Activated CD8-positive, alpha-beta memory T cell treated with anti-CD3 and anti-CD28 coated beads, Interleukin-2, amount 10 ng/mL, durations not matched to agents 7 days and 5 days (primary cell): ENCODE measurements at regions of chr1 and their contacts with region 1.

Region 1: DNA sequence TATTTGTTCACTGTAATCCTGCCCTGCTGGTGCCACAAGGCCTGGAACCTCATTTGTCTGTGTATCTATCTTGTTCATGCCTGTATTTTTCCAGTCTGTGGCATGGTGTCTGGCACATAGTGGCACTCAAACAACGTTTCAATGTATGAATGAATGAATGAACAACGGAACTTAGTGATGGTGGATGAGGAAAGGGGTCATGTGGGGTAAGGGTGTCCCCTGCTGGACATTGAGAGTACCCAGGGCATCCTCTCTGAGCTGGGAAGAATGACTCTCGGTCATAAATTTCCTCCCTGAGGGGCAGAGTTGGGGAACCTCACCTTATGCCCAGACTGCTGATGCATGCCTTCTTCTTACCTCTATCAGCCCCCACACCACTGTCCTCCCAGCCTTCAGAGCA is 18.9 kb upstream of the ZNF683 start:
- DNase-seq: peak; percentile 78
- ATAC-seq: peak; percentile 80
- H3K4me3 Mint-ChIP-seq: no peak overlapping the region
- H3K27ac Mint-ChIP-seq: peak overlapping the region; percentile 62
- H3K4me1 Mint-ChIP-seq: peaks cover 55% of the 10 kb centered on the region
- H3K27me3 Mint-ChIP-seq: peaks cover 4% of the 10 kb centered on the region

Region 2: DNA sequence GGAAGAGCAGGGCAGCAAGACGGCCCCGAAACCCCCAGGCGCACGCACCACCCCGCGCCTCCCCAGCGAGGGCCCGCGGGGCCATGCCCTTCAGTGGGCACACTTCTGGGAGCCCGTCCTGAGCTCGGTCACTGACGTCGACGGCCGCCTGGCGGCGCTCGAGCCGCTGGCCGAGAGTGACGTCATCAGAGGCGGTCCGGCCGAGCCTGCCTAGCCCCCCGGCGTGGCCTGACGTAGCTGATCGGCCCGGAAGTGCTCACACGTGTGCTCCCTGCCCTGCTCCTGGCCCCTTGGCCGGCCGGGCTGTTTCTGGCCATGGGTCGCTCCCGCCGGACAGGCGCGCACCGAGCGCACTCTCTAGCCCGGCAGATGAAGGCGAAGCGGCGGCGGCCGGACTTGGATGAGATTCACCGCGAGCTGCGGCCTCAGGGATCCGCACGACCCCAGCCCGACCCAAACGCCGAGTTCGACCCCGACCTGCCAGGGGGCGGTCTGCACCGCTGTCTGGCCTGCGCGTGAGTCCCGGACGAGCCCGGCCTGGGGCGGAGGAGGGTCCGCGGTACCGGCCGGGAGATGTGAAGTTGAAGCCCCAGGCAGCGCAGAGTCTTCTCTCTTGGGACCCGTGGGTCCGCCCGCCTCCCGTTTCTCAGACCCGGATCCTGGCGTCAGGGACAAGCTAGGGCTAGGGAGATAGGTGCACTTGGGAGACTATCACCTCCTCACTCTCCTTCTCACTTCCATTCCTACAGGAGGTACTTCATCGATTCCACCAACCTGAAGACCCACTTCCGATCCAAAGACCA is 221.6 kb before region 1 on chr1 and contains the start of gene ZNF593:
- CTCF ChIA-PET with region 1: interaction called, 17 read pairs
- DNase-seq: peak; percentile 92
- ATAC-seq: peak; percentile 97
- H3K4me3 Mint-ChIP-seq: peak within 1 kb of the TSS; percentile 89
- H3K27ac Mint-ChIP-seq: peak within 1 kb of the TSS; percentile 88
- H3K4me1 Mint-ChIP-seq: peaks cover 26% of the 10 kb centered on the region
- H3K27me3 Mint-ChIP-seq: peaks cover 11% of the 10 kb centered on the region
- total RNA-seq, gene ZNF593: 40.1 to 48.1 TPM

Region 3: GRCh38 chr1:26284597-26285360 is 106.7 kb before region 1 on chr1:
- CTCF ChIA-PET with region 1: interaction called, 96 read pairs
- DNase-seq: peak; percentile 99
- ATAC-seq: peak; percentile 71
- H3K4me3 Mint-ChIP-seq: peak overlapping the region; percentile 69
- H3K27ac Mint-ChIP-seq: peak overlapping the region; percentile 99
- H3K4me1 Mint-ChIP-seq: peaks cover 89% of the 10 kb centered on the region
- H3K27me3 Mint-ChIP-seq: no peaks in the 10 kb centered on the region

Region 4: GRCh38 chr1:26327956-26328362 is 63.5 kb before region 1 on chr1:
- CTCF ChIA-PET with region 1: interaction called, 39 read pairs
- DNase-seq: no peak
- ATAC-seq: no peak
- H3K4me3 Mint-ChIP-seq: no peak overlapping the region
- H3K27ac Mint-ChIP-seq: no peak overlapping the region
- H3K4me1 Mint-ChIP-seq: peaks cover 6% of the 10 kb centered on the region
- H3K27me3 Mint-ChIP-seq: no peaks in the 10 kb centered on the region

Region 5: DNA sequence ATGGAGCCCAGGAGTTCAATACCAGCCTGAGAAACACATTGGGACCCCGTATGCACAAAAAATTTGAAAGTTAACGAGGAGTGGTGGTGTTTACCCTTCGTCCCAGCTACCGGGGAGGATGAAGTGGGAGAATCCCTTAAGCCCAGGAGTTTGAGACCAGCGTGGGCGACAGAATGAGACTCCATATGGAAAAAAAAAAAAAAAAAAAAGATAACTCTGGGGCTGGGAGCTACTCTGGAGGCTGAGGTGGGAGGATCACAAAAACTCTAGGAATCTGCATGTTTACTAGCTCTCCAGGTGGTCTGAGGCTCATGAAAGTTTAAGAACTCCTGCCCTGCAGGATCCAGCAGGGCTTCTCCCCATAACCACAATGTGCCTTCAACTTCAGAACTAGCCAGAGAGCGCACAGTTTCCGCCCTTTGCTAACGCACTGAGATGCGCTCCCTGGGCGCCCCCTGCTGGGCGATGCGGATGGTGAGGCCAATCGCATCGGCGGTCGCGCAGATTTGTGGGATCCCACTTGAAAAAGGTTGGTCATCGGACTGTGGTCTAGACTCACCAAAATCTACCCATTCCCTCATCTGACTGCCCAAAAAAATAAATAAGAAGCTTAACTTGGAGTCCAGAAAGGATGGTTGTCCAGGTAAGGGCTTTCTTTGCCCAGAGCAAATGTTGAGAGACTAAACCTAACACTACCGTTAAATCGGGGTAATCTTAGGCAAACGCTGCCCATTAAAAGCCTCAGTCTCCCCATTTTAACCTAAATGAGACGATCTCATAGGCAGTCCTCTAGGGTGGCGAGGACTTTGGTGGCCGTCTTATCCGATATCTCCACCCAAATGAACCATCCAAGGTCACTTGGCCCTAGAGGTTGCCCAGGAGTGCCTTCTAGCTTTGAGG is 27.7 kb before region 1 on chr1:
- CTCF ChIA-PET with region 1: interaction called, 65 read pairs
- DNase-seq: peak; percentile 90
- ATAC-seq: peak; percentile 76
- H3K4me3 Mint-ChIP-seq: peak overlapping the region; percentile 7
- H3K27ac Mint-ChIP-seq: peak overlapping the region; percentile 72
- H3K4me1 Mint-ChIP-seq: peaks cover 53% of the 10 kb centered on the region
- H3K27me3 Mint-ChIP-seq: peaks cover 23% of the 10 kb centered on the region

Region 6: GRCh38 chr1:26378088-26378878 is 13.2 kb before region 1 on chr1:
- CTCF ChIA-PET with region 1: interaction called, 180 read pairs
- DNase-seq: peak; percentile 96
- ATAC-seq: peak; percentile 96
- H3K4me3 Mint-ChIP-seq: peak overlapping the region; percentile 29
- H3K27ac Mint-ChIP-seq: peak overlapping the region; percentile 87
- H3K4me1 Mint-ChIP-seq: peaks cover 75% of the 10 kb centered on the region
- H3K27me3 Mint-ChIP-seq: peaks cover 2% of the 10 kb centered on the region

Region 7: DNA sequence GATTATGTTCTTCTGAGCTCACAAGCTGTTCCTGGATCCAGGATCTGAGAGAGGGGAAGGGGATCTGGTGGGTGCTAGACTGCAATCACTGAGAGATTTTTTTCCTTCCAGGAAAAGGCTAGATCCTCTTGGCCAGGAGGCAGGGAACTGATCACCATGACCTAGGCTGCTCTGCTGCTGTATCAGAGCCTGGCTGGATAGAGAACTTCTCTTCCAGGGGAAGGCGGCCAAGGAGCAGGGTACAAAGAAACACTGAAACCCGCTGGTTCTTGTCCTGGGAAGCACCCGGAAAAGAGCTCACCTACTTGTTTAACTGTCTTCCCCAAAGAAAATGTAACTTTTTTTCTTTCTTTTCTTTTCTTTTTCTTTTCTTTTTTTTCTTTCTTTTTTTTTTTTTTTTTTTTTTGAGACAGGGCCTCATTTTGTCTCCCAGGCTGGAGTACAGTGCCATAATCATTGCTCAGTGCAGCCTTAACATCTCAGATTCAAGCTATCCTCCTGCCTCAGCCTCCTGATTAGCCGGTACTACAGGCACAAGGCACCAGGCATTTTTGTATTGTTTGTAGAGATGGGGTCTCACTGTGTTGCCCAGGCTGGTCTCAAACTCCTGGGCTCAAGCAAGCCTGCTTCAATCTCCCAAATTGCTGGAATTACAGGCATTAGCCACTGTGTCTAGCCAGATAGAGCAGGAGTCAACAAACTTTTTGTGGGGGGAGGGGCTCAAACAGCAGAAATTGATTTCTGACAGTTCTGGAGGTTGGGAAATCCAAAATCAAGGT is 125.7 kb after region 1 on chr1:
- CTCF ChIA-PET with region 1: no interaction called
- DNase-seq: no peak
- ATAC-seq: no peak
- H3K4me3 Mint-ChIP-seq: no peak overlapping the region
- H3K27ac Mint-ChIP-seq: no peak overlapping the region
- H3K4me1 Mint-ChIP-seq: no peaks in the 10 kb centered on the region
- H3K27me3 Mint-ChIP-seq: peaks cover 11% of the 10 kb centered on the region